ENCODE measurements at regions of chr16 and their contacts with region 1.

Region 1: GRCh38 chr16:67246934-67247697 is at the start of gene FHOD1:
- DNase-seq: peak; percentile 98
- H3K4me3 Mint-ChIP-seq: peak within 1 kb of the TSS; percentile 91
- H3K27ac Mint-ChIP-seq: peak within 1 kb of the TSS; percentile 87
- H3K4me1 Mint-ChIP-seq: peaks cover 47% of the 10 kb centered on the region
- H3K27me3 Mint-ChIP-seq: peaks cover 24% of the 10 kb centered on the region
- total RNA-seq, gene FHOD1: 59.2 to 62.0 TPM

Region 2: DNA sequence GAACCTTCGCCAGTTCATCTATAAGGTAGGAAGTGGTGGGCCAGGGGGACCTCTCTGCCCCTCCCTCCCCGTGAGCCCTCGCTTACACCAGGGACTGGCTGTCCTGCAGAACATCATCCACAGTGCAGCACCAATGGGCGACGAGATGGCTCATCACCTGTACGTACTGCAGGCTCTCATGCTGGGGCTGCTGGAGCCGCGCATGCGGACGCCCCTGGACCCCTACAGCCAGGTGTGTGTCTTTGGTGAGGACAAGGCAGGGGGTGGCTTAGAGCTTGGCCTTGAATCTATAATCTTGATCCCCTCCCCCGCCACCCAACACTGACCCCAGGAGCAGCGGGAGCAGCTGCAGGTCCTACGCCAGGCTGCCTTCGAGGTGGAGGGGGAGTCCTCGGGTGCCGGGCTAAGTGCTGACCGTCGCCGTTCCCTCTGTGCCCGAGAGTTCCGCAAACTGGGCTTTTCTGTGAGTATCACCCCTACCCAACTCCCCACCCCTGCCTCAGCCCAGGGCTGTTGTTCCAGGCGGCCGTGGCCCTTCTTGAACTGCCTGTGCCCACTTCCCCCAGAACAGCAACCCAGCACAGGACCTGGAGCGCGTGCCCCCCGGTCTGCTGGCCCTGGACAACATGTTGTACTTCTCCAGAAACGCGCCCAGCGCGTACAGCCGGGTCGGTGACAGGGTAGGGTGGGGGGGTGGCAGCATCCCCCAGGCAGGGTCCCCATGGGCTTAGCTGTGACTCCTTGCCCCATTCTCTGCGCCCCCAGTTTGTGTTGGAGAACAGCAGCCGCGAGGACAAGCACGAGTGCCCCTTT is 45.5 kb before region 1 on chr16:
- CTCF ChIA-PET with region 1: no interaction called
- POLR2A ChIA-PET with region 1: no interaction called
- DNase-seq: no peak
- H3K4me3 Mint-ChIP-seq: no peak overlapping the region
- H3K27ac Mint-ChIP-seq: no peak overlapping the region
- H3K4me1 Mint-ChIP-seq: peaks cover 4% of the 10 kb centered on the region
- H3K27me3 Mint-ChIP-seq: no peaks in the 10 kb centered on the region

Region 3: GRCh38 chr16:67226804-67227557 is 20.1 kb before region 1 on chr16 and contains the start of gene TMEM208:
- CTCF ChIA-PET with region 1: interaction called, 24 read pairs
- POLR2A ChIA-PET with region 1: interaction called, 7 read pairs
- DNase-seq: peak; percentile 99
- H3K4me3 Mint-ChIP-seq: peak within 1 kb of the TSS; percentile 98
- H3K27ac Mint-ChIP-seq: peak within 1 kb of the TSS; percentile 94
- H3K4me1 Mint-ChIP-seq: peaks cover 51% of the 10 kb centered on the region
- H3K27me3 Mint-ChIP-seq: no peaks in the 10 kb centered on the region
- total RNA-seq, gene TMEM208: 25.8 to 40.8 TPM

Region 4: GRCh38 chr16:67236563-67237395 is 10.3 kb before region 1 on chr16:
- CTCF ChIA-PET with region 1: interaction called, 20 read pairs
- POLR2A ChIA-PET with region 1: interaction called, 4 read pairs
- DNase-seq: peak; percentile 76
- H3K4me3 Mint-ChIP-seq: peak overlapping the region; percentile 55
- H3K27ac Mint-ChIP-seq: peak overlapping the region; percentile 92
- H3K4me1 Mint-ChIP-seq: peaks cover 15% of the 10 kb centered on the region
- H3K27me3 Mint-ChIP-seq: no peaks in the 10 kb centered on the region

Region 5: DNA sequence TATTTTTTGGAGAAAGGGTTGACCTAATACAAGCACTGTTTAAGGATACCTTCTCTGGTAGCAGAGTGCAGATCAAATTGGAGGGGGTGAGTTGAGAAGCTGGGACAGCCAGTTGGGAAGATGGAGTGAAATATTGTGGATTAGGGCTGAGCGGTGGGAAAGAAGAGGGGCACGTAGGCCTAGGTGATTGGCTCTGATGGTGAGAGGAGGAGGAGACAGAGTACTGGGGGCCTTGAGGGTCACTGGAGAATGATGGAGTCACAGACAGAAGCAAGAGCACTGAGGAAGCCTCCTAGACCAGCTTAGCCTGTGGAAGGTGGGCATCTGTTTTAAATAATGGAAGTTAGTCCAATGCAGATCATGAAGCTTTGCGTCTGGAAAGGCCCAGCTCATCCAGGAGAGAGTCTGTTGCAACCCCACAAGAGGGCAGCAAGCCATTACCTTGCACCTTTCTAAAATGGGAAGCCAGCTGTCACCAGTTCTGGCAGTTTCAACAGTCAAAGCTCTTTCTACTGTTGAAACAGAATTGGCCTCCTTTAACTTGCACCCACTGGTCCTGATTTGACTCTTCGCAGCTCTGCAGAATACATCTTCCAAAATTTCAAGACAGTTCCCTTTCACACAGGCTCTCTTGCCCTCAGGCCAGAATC is 13.4 kb after region 1 on chr16:
- CTCF ChIA-PET with region 1: interaction called, 12 read pairs
- POLR2A ChIA-PET with region 1: no interaction called
- DNase-seq: peak; percentile 53
- H3K4me3 Mint-ChIP-seq: no peak overlapping the region
- H3K27ac Mint-ChIP-seq: no peak overlapping the region
- H3K4me1 Mint-ChIP-seq: no peaks in the 10 kb centered on the region
- H3K27me3 Mint-ChIP-seq: peaks cover 8% of the 10 kb centered on the region

Measured in activated CD4-positive, alpha-beta T cell treated with anti-CD3 and anti-CD28 coated beads, Interleukin-2, amount 10 ng/mL, durations not matched to agents 7 days and 5 days (primary cell).